ENCODE measurements at regions of chr18 and their contacts with region 1.

Region 1: GRCh38 chr18:32018331-32019250 is at the start of gene RNF125:
- DNase-seq: peak; percentile 94
- H3K4me3 Mint-ChIP-seq: peak within 1 kb of the TSS; percentile 90
- H3K27ac Mint-ChIP-seq: peak within 1 kb of the TSS; percentile 99
- H3K4me1 Mint-ChIP-seq: peaks cover 53% of the 10 kb centered on the region
- H3K27me3 Mint-ChIP-seq: no peaks in the 10 kb centered on the region
- total RNA-seq, gene RNF125: 43.8 to 48.4 TPM

Region 2: DNA sequence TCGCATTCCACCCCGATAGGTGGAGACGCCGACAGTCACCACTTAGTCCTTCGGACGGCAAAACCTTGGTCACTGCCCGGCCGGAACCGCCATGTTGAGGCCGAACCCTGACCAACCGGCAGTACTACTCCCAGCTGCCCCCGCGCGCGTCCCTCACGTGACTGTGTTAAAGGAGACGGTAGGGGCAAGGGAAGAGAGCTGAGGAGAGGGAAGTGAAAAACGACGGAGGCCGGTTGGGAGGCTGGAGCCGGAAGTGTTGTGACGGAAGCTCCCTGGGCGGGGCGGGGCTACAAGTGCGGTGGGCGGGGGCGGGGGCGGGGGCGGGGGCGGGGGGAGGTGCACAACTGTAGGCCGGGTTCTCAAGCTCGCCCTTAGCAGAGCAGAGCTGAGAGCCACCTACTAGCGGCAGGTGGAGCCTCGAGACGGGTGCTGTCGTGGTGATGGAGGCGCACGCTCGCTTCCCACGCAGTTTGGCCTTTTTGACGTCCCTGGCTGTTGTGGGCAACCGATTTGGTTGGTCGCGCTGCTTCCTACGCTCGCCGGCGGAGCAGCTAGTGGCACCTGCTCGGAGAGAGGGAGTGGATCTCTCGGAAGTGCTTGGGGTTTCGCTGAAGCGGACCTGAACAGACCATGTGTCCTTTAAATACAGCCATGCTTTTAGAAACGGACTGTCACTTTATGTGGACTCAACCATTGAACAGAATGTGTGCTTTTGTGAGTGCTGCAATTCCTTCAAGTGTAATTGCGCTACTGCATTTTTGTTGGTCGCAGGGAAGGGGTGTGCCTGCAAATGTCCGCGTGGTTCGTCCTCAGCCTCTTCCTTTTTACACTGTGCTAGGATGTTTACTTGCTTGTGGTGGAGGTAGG is 75.4 kb before region 1 on chr18 and contains the start of gene TRAPPC8:
- CTCF ChIA-PET with region 1: interaction called, 56 read pairs
- POLR2A ChIA-PET with region 1: interaction called, 132 read pairs
- DNase-seq: peak; percentile 94
- H3K4me3 Mint-ChIP-seq: peak within 1 kb of the TSS; percentile 100
- H3K27ac Mint-ChIP-seq: peak within 1 kb of the TSS; percentile 98
- H3K4me1 Mint-ChIP-seq: peaks cover 51% of the 10 kb centered on the region
- H3K27me3 Mint-ChIP-seq: no peaks in the 10 kb centered on the region
- total RNA-seq, gene TRAPPC8: 40.1 to 42.7 TPM

Region 3: DNA sequence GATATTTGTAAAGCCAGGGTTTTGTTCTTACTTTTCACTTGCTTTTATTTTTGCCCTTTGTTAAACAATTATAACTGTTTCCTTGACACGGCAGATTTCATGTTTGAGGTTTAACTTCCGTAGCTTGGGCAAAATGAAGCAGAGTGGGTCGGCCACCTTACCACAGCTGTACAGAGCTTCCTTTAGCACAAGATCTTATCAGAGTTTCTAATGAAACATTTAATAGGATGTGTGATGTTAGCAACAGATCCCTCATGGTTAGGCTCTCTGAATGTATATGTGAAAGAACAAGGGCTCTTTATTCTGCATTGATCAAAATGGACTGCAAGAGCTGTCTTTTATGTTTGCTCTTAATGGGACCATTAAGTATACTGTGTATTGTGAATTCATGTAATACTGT is 22.3 kb after region 1 on chr18:
- CTCF ChIA-PET with region 1: interaction called, 64 read pairs
- POLR2A ChIA-PET with region 1: interaction called, 182 read pairs
- DNase-seq: peak; percentile 79
- H3K4me3 Mint-ChIP-seq: peak overlapping the region; percentile 55
- H3K27ac Mint-ChIP-seq: peak overlapping the region; percentile 96
- H3K4me1 Mint-ChIP-seq: peaks cover 67% of the 10 kb centered on the region
- H3K27me3 Mint-ChIP-seq: no peaks in the 10 kb centered on the region

Region 4: DNA sequence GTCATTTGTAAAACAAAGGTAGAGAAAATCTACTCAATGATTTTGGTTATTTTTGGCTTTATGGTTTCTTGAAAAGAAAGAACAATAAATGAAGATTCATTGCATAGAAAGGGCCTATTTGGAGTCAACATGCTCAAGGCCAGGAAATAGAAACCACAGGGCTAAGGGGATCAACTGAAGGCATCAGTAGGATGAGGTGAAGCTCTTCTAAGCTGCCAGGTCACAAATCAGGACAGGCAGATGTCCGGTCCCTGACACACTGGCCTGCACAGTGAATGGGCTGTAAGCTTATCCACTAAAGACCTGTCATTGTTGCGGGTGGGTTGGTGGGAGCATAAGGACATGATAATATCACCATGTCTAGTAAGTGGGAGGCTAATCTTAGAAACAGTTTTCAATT is 41.4 kb after region 1 on chr18:
- CTCF ChIA-PET with region 1: interaction called, 7 read pairs
- POLR2A ChIA-PET with region 1: interaction called, 15 read pairs
- DNase-seq: no peak
- H3K4me3 Mint-ChIP-seq: no peak overlapping the region
- H3K27ac Mint-ChIP-seq: no peak overlapping the region
- H3K4me1 Mint-ChIP-seq: peaks cover 40% of the 10 kb centered on the region
- H3K27me3 Mint-ChIP-seq: no peaks in the 10 kb centered on the region

Region 5: DNA sequence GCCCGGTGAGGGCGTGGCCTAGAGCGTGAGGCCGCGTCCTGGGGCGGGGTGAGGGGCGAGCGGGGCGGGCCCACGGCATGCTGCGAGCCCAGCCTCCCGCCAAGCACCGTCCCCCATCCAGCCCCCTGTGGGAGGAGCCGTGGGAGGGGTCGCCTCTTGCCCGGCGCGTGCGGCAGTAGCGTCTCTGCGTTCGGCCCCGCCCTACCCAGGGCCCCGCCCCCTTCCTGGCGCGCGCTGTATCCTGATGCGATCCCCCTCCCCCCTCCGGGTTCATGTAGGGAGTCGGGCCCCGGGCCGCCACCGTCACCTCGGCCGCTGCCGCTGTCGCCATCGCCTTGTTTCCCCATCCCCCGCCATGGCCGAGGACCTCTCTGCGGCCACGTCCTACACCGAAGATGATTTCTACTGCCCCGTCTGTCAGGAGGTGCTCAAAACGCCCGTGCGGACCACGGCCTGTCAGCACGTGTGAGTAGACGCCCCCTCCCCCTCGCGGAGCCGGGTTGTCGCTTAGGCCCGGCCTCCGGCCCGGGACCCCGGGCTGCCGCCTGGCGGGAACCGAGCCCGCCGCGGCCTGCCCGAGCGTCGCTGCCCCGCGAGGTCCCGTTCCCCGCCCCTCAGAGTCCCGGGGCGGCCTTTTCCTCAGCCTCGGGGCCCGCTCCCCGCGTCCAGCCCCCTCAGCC is 74.0 kb after region 1 on chr18:
- CTCF ChIA-PET with region 1: interaction called, 4 read pairs
- POLR2A ChIA-PET with region 1: interaction called, 166 read pairs
- DNase-seq: peak; percentile 99
- H3K4me3 Mint-ChIP-seq: peak overlapping the region; percentile 96
- H3K27ac Mint-ChIP-seq: peak overlapping the region; percentile 97
- H3K4me1 Mint-ChIP-seq: peaks cover 47% of the 10 kb centered on the region
- H3K27me3 Mint-ChIP-seq: no peaks in the 10 kb centered on the region